Vagina (tissue), 2 donors: ENCODE measurements at regions of chr14 and their contacts with region 1.

Region 1: DNA sequence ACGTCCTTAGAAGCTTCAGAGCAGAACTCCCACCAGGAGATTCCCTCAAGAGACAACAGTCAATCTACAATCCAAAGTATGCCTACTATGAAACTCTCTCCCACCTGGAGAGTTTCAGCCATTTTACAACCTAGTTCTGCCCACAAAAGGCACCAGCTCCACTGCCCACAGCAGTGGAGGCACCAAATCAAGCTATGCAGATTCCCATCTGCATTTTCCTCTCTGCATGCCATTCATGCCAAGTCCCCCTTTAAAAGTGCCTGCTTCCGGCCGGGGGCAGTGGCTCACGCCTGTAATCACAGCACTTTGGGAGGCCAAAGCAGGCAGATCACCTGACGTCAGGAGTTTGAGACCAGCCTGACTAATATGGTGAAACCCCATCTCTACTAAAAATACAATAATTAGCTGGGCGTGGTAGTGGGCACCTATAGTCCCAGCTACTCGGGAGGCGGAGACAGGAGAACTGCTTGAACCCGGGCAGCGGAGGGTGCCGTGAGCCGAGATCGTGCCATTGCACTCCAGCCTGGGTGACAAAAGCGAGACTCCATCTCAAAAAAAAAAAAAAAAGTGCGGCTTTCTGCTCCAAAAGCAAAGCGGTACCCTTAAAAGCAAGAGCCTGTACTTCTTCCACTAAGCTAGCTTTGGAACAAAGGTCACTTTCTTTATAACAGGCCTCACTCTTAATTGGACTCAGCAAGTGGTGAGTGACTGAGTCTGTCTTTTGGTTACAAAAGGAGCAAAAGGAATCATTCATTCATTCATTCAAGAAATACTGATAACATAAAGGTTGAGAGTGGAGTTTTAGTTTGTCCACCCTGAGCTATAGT is 10.1 kb upstream of the DLGAP5 start:
- DNase-seq: no peak
- H3K4me3 ChIP-seq: no peak overlapping the region
- H3K27ac ChIP-seq: no peak overlapping the region
- H3K4me1 ChIP-seq: no peaks in the 10 kb centered on the region
- H3K27me3 ChIP-seq: no peaks in the 10 kb centered on the region
- CTCF ChIP-seq: no peak
- POLR2A ChIP-seq: no peak

Region 2: GRCh38 chr14:55077155-55077554 is 124.3 kb before region 1 on chr14:
- intact Hi-C with region 1: no loop called
- DNase-seq: no peak
- H3K4me3 ChIP-seq: no peak overlapping the region
- H3K27ac ChIP-seq: peak overlapping the region; percentile 62
- H3K4me1 ChIP-seq: peaks cover 20% of the 10 kb centered on the region
- H3K27me3 ChIP-seq: no peaks in the 10 kb centered on the region
- CTCF ChIP-seq: no peak
- POLR2A ChIP-seq: no peak

Region 3: GRCh38 chr14:55170526-55170925 is 30.9 kb before region 1 on chr14:
- intact Hi-C with region 1: loop called (anchors 1 kb)
- DNase-seq: no peak
- H3K4me3 ChIP-seq: no peak overlapping the region
- H3K27ac ChIP-seq: no peak overlapping the region
- H3K4me1 ChIP-seq: no peaks in the 10 kb centered on the region
- H3K27me3 ChIP-seq: no peaks in the 10 kb centered on the region
- CTCF ChIP-seq: no peak
- POLR2A ChIP-seq: no peak